K562 (cell line): ENCODE measurements at regions of chr17 and their contacts with region 1.

Region 1: DNA sequence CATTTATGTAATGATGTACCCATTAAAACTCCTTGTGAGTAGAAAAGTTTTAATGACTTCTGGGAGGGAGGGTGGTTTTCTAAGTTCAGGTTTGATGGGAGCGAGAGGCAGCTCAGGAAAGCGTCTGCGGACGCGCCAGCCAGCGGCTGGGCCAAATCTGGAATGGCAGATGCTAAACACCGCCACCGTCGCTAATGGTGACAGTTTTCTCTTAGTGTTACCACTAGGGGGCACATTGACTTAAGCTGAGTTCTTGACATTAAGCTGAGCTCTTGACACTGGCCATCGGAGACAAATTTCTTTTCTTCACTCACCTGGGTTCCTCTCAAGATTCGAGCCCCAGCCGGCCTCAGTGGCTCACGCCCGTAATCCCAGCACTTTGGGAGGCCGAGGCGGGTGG is 6.7 kb downstream of the TRPV1 start:
- DNase-seq: peak; percentile 60 to 75 (median 64)
- ATAC-seq: peak; percentile 95
- H3K4me3 ChIP-seq: no peak overlapping the region
- H3K27ac ChIP-seq: no peak overlapping the region
- H3K4me1 ChIP-seq: peaks cover 0 to 4% of the 10 kb centered on the region in 2 experiments; a peak in 2 of 5 replicates
- H3K27me3 ChIP-seq: no peaks in the 10 kb centered on the region
- CTCF ChIP-seq: peak; percentile 73 to 80 (median 75)
- EP300 ChIP-seq: no peak
- POLR2A ChIP-seq: no peak
- RAD21 ChIP-seq: peak; percentile 27 to 63; a peak in 3 of 4 replicates

Region 2: DNA sequence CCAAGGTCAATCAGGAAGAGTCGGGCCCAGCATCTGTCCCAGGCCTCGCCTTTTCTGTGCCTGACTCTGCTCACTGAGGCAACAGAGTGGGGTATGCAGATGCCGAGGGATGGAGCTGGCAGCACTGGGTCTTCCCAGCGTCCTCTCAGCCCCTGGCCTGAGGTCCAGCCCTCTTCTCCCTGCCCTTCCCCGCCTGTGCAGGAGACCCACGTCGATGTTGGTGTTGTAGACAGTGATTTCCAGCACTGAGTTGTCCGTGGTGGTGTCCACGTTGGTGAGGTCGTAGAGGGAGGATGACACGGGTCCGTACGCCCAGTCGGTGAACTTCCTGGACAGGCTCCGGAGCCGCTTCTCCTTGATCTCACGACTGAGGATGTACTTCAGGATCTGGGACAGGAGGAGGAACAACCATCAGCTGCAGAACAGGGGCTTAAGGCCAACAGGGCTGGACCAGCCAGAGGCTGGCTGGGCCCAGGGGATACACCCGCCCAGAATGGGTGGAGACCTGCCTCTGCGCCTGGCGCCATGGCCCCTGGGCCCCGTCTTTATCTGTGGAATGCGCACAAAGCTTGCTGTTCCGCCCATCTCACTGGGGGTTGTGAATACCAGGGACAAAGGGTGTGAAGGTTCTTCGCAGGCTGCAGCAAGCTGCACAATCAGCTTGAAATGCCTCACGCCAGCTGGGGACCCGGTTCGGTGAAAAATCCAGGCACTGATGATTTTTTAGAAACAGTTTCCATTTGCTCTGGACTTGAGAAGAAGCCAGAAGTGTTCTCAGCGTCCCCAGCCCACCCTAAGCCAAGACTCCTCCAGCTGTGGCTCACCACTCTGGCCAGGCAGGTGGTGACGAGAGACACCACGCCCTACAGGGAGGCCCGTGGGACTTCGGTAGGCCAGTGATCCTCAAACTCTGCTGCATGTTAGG is 72.4 kb before region 1 on chr17:
- CTCF ChIA-PET with region 1: no interaction called
- POLR2A ChIA-PET with region 1: no interaction called
- in situ Hi-C with region 1: no loop called
- intact Hi-C with region 1: no loop called
- DNase-seq: no peak
- ATAC-seq: no peak
- H3K4me3 ChIP-seq: no peak overlapping the region
- H3K27ac ChIP-seq: no peak overlapping the region
- H3K4me1 ChIP-seq: no peaks in the 10 kb centered on the region
- H3K27me3 ChIP-seq: peaks cover 16 to 69% of the 10 kb centered on the region in 2 experiments; a peak in 4 of 5 replicates
- CTCF ChIP-seq: no peak
- EP300 ChIP-seq: no peak
- POLR2A ChIP-seq: no peak
- RAD21 ChIP-seq: no peak

Region 3: DNA sequence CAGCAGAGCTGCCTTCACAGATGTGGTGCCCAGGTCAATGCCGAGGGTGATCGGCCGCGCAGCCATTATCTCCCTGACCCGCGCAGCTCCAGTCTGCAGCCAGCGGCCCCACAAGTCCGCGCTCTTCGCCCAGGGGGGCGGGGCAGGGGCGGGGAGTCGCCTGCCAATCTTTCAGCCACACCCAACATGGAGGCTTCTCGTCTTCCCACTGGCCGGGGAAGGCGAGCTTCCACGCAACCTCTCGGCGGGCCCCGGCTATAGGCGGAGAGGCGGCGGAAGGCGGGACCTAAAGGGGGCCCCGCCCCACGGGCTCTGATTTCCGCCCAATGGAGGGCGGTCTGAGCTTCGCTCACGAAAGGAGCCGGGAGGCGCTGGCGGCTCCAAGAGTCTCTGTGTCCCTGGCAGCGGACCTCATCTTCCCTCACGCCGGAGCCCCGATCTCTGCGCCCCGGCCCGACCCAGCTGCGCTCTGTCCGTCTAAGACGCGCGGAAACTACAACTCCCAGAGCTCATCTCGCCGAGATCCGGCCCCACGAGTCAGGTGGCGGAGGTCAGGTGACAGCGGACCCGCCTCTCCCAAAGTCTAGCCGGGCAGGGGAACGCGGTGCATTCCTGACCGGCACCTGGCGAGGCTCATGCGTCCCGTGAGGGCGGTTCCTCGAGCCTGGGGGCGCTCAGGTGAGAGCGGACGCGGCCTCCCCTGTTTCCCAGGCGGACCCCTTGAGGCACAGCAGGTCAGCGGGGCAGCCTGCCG is 33.8 kb after region 1 on chr17 and contains the starts of genes CTNS and SHPK:
- CTCF ChIA-PET with region 1: no interaction called
- POLR2A ChIA-PET with region 1: interaction called, 4 read pairs
- in situ Hi-C with region 1: no loop called
- intact Hi-C with region 1: loop called (anchors 5 kb)
- DNase-seq: peak; percentile 92 to 96 (median 95)
- ATAC-seq: peak; percentile 97
- H3K4me3 ChIP-seq: peak within 1 kb of the TSS; percentile 63
- H3K27ac ChIP-seq: peak within 1 kb of the TSS; percentile 66
- H3K4me1 ChIP-seq: peaks cover 16 to 28% of the 10 kb centered on the region in 2 experiments
- H3K27me3 ChIP-seq: no peaks in the 10 kb centered on the region
- CTCF ChIP-seq: no peak
- EP300 ChIP-seq: no peak
- POLR2A ChIP-seq: peak; percentile 70
- RAD21 ChIP-seq: no peak
- polyA plus RNA-seq, gene CTNS: 0.66 to 1.0 TPM
- polyA plus RNA-seq, gene SHPK: 2.5 to 2.6 TPM

Region 4: GRCh38 chr17:3695723-3696411 is 93.4 kb after region 1 on chr17 and contains the start of gene P2RX5:
- CTCF ChIA-PET with region 1: interaction called, 9 read pairs
- POLR2A ChIA-PET with region 1: no interaction called
- in situ Hi-C with region 1: no loop called
- intact Hi-C with region 1: loop called (anchors 10 kb)
- DNase-seq: peak; percentile 20 to 57 (median 46)
- ATAC-seq: peak; percentile 62
- H3K4me3 ChIP-seq: peak within 1 kb of the TSS; percentile 19; the same call in 1 of the 2 replicates
- H3K27ac ChIP-seq: no peak within 1 kb of the TSS
- H3K4me1 ChIP-seq: peaks cover 0 to 24% of the 10 kb centered on the region in 2 experiments; a peak in 2 of 5 replicates
- H3K27me3 ChIP-seq: no peaks in the 10 kb centered on the region
- CTCF ChIP-seq: no peak
- EP300 ChIP-seq: no peak
- POLR2A ChIP-seq: no peak
- RAD21 ChIP-seq: no peak
- polyA plus RNA-seq, gene P2RX5: 0.31 to 0.61 TPM